Endothelial cell of umbilical vein (primary cell): ENCODE measurements at regions of chr5 and their contacts with region 1.

Region 1: GRCh38 chr5:1641560-1642166 is 117.9 kb upstream of the LPCAT1 start:
- DNase-seq: peak; percentile 79
- H3K4me3 ChIP-seq: no peak overlapping the region
- H3K27ac ChIP-seq: no peak overlapping the region
- H3K4me1 ChIP-seq: no peaks in the 10 kb centered on the region
- H3K27me3 ChIP-seq: peaks cover 11 to 12% of the 10 kb centered on the region in 2 experiments
- CTCF ChIP-seq: peak; percentile 81 to 97
- POLR2A ChIP-seq: no peak

Region 2: GRCh38 chr5:1167728-1168709 is 473.6 kb before region 1 on chr5:
- CTCF ChIA-PET with region 1: interaction called, 33 read pairs
- POLR2A ChIA-PET with region 1: no interaction called
- dilution Hi-C with region 1: no loop called
- intact Hi-C with region 1: loop called (anchors 1 kb)
- DNase-seq: peak; percentile 56
- H3K4me3 ChIP-seq: no peak overlapping the region
- H3K27ac ChIP-seq: no peak overlapping the region
- H3K4me1 ChIP-seq: no peaks in the 10 kb centered on the region
- H3K27me3 ChIP-seq: no peaks in the 10 kb centered on the region
- CTCF ChIP-seq: peak; percentile 61 to 78
- POLR2A ChIP-seq: no peak

Region 3: DNA sequence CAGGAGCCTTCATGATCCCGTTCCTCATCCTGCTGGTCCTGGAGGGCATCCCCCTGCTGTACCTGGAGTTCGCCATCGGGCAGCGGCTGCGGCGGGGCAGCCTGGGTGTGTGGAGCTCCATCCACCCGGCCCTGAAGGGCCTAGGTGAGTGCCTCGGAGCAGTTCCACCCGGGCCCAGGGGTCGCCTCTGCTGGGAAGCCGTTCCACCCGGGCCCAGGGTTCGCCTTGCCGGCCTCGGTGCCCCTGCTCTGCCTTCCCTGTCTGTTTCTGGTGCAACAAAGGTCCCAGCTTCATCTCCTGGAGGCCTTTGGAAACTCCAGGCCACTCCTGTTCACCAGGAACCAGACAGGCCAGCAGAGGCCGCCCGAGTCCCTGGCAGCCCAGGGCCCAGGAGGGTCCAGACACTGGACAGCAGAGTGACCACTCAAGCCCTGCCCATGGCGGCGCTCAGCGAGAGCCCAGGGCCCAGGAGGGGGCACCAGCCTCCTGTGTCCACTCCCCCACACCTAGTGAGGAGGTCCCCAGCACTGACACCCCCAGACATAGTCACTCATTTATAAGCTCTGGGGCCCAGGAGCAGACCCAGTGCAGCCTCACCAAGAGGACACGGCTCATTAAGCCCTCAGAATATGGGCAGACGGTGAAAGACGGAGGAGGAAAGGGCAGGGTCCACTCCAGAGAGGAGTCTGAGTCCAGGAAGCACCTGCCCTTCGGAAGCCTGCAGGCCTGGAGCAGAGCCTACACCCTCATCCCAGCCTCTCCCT is 432.7 kb before region 1 on chr5:
- CTCF ChIA-PET with region 1: interaction called, 55 read pairs
- POLR2A ChIA-PET with region 1: no interaction called
- dilution Hi-C with region 1: no loop called
- intact Hi-C with region 1: loop called (anchors 2 kb)
- DNase-seq: peak; percentile 24
- H3K4me3 ChIP-seq: no peak overlapping the region
- H3K27ac ChIP-seq: no peak overlapping the region
- H3K4me1 ChIP-seq: no peaks in the 10 kb centered on the region
- H3K27me3 ChIP-seq: no peaks in the 10 kb centered on the region
- CTCF ChIP-seq: peak; percentile 18 to 63
- POLR2A ChIP-seq: no peak

Region 4: DNA sequence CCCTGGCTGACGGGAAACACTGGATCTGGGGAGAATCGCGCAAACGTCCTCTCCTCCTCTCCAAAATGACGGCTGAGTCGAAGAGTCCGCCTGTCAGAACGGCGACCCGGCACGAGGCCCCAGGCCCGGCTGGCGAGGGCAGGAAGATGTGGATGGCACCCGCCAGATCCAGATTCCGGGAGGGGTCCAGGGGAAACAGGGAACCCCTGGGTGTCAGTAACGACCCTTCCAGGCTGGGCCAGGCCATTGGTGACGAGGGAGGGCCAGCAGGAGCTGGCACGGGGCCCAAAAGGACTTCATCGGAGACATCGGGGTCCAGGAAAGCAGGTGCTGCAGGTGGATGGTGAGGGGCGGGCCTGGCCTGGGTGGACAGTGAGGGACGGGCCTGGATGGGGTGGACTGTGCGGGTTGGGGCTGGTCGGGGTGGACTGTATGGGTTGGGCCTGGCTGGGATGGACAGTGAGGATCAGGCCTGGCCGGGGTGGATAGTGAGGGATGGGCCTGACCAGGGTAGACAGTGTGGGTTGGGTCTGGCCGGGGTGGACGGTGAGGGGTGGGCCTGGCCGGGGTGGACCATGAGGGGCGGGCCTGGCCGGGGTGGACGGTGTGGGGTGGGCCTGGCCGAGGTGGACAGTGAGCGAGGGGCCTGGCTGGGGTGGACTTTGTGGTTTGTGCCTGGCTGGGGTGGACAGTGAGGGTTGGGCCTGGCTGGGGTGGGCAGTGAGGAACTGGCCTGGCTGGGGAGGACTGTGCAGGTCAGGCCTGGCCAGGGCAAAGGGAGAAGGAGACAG is 210.4 kb before region 1 on chr5:
- CTCF ChIA-PET with region 1: no interaction called
- POLR2A ChIA-PET with region 1: no interaction called
- dilution Hi-C with region 1: no loop called
- intact Hi-C with region 1: no loop called
- DNase-seq: no peak
- H3K4me3 ChIP-seq: no peak overlapping the region
- H3K27ac ChIP-seq: no peak overlapping the region
- H3K4me1 ChIP-seq: no peaks in the 10 kb centered on the region
- H3K27me3 ChIP-seq: no peaks in the 10 kb centered on the region
- CTCF ChIP-seq: no peak
- POLR2A ChIP-seq: no peak

Region 5: GRCh38 chr5:1479581-1480188 is 162.0 kb before region 1 on chr5:
- CTCF ChIA-PET with region 1: interaction called, 7 read pairs
- POLR2A ChIA-PET with region 1: no interaction called
- dilution Hi-C with region 1: no loop called
- intact Hi-C with region 1: loop called (anchors 1 kb)
- DNase-seq: peak; percentile 27
- H3K4me3 ChIP-seq: no peak overlapping the region
- H3K27ac ChIP-seq: no peak overlapping the region
- H3K4me1 ChIP-seq: no peaks in the 10 kb centered on the region
- H3K27me3 ChIP-seq: no peaks in the 10 kb centered on the region
- CTCF ChIP-seq: peak; percentile 70 to 77
- POLR2A ChIP-seq: no peak

Region 6: GRCh38 chr5:1594357-1595106 is 47.1 kb before region 1 on chr5:
- CTCF ChIA-PET with region 1: interaction called, 3 read pairs
- POLR2A ChIA-PET with region 1: no interaction called
- dilution Hi-C with region 1: no loop called
- intact Hi-C with region 1: loop called (anchors 2 kb)
- DNase-seq: peak; percentile 75
- H3K4me3 ChIP-seq: peak overlapping the region; percentile 53 to 75 (median 53)
- H3K27ac ChIP-seq: no peak overlapping the region
- H3K4me1 ChIP-seq: no peaks in the 10 kb centered on the region
- H3K27me3 ChIP-seq: no peaks in the 10 kb centered on the region
- CTCF ChIP-seq: peak; percentile 31 to 46
- POLR2A ChIP-seq: peak; percentile 64

Region 7: DNA sequence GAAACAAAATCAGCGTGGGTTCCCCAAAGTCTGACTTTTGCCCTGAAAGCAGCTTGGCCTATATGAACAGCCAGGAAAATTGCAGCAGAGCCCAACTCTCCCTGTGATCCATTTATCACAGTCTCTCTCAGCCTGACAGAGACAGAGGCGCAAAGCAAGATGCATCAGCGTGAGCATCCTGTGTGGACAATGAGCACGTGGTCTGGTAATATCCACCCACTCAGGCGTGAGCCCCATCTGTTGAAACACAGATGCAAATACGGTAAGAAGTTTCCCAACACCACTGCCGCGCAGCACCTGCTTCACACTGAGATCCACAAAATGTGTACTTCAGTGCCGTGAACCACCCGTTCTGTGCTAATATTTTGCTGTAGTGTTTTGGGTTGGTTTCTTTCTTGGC is 43.4 kb after region 1 on chr5:
- CTCF ChIA-PET with region 1: no interaction called
- POLR2A ChIA-PET with region 1: no interaction called
- dilution Hi-C with region 1: no loop called
- intact Hi-C with region 1: no loop called
- DNase-seq: no peak
- H3K4me3 ChIP-seq: no peak overlapping the region
- H3K27ac ChIP-seq: no peak overlapping the region
- H3K4me1 ChIP-seq: no peaks in the 10 kb centered on the region
- H3K27me3 ChIP-seq: no peaks in the 10 kb centered on the region
- CTCF ChIP-seq: no peak
- POLR2A ChIP-seq: no peak